ENCODE measurements at regions of chr18 and their contacts with region 1.

Region 1: DNA sequence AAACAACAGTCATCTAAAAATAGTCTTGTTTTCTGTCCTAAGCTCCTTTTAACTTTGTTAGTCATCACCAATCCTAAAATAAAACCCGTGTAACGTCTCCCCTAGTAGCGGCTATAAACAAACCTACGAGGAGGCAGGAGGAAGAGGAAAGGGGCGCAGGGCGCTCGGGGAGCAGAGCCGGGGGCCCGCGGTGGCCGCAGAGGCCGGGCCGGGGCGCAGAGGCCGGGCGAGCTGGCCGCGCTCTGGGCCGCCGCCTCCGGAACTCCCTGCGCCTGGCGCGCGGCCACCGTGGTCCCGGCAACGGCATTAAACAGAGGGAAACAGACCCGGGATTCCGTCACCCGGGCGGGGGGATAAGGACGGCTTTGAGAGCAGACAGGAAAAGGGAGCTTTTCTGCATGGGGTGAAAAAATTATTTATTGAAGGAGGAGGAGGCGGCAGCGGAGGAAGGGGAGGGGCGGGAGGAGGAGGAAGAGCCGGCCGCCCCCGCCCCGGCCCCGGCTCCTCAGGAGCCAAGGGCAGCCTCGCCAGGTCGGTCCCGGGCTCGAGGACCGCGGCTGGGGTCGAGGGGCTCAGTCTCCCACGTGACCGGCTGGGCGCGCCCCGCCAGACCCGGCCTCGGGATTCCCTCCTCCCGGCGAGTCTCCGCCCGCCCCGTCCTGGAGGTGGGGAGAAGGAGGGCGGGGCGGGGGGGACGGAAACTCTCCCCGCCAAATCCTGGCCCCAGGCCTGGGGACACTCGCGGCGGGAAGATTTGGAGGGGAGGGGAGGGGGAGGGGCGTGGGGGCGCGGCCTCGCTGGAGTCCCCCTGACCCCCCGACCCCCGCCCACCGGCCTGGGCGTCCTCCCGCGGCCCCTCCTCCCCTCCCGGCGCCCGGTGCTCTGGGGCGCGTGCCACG is 1.8 kb upstream of the NFATC1 start:
- DNase-seq: peak; percentile 67
- H3K4me3 Mint-ChIP-seq: peak overlapping the region; percentile 77
- H3K27ac Mint-ChIP-seq: peak overlapping the region; percentile 74
- H3K4me1 Mint-ChIP-seq: peaks cover 25% of the 10 kb centered on the region
- H3K27me3 Mint-ChIP-seq: peaks cover 4% of the 10 kb centered on the region

Region 2: GRCh38 chr18:79378542-79379250 is 15.2 kb before region 1 on chr18:
- CTCF ChIA-PET with region 1: interaction called, 35 read pairs
- POLR2A ChIA-PET with region 1: no interaction called
- intact Hi-C with region 1: loop called (anchors 2 kb)
- DNase-seq: peak; percentile 90
- H3K4me3 Mint-ChIP-seq: no peak overlapping the region
- H3K27ac Mint-ChIP-seq: no peak overlapping the region
- H3K4me1 Mint-ChIP-seq: peaks cover 15% of the 10 kb centered on the region
- H3K27me3 Mint-ChIP-seq: no peaks in the 10 kb centered on the region

Region 3: GRCh38 chr18:79405781-79406575 is 12.1 kb after region 1 on chr18:
- CTCF ChIA-PET with region 1: interaction called, 6 read pairs
- POLR2A ChIA-PET with region 1: interaction called, 15 read pairs
- intact Hi-C with region 1: loop called (anchors 1 kb)
- DNase-seq: peak; percentile 94
- H3K4me3 Mint-ChIP-seq: peak overlapping the region; percentile 69
- H3K27ac Mint-ChIP-seq: peak overlapping the region; percentile 94
- H3K4me1 Mint-ChIP-seq: peaks cover 55% of the 10 kb centered on the region
- H3K27me3 Mint-ChIP-seq: no peaks in the 10 kb centered on the region

Region 4: GRCh38 chr18:79422022-79422782 is 28.3 kb after region 1 on chr18:
- CTCF ChIA-PET with region 1: no interaction called
- POLR2A ChIA-PET with region 1: no interaction called
- intact Hi-C with region 1: no loop called
- DNase-seq: no peak
- H3K4me3 Mint-ChIP-seq: no peak overlapping the region
- H3K27ac Mint-ChIP-seq: no peak overlapping the region
- H3K4me1 Mint-ChIP-seq: peaks cover 34% of the 10 kb centered on the region
- H3K27me3 Mint-ChIP-seq: no peaks in the 10 kb centered on the region

Region 5: GRCh38 chr18:79434607-79435401 is 40.9 kb after region 1 on chr18:
- CTCF ChIA-PET with region 1: interaction called, 11 read pairs
- POLR2A ChIA-PET with region 1: interaction called, 7 read pairs
- intact Hi-C with region 1: loop called (anchors 1 kb)
- DNase-seq: no peak
- H3K4me3 Mint-ChIP-seq: no peak overlapping the region
- H3K27ac Mint-ChIP-seq: no peak overlapping the region
- H3K4me1 Mint-ChIP-seq: peaks cover 60% of the 10 kb centered on the region
- H3K27me3 Mint-ChIP-seq: no peaks in the 10 kb centered on the region

Region 6: GRCh38 chr18:79523736-79524180 is 129.9 kb after region 1 on chr18:
- CTCF ChIA-PET with region 1: interaction called, 22 read pairs
- POLR2A ChIA-PET with region 1: interaction called, 63 read pairs
- intact Hi-C with region 1: loop called (anchors 1 kb)
- DNase-seq: peak; percentile 88
- H3K4me3 Mint-ChIP-seq: peak overlapping the region; percentile 75
- H3K27ac Mint-ChIP-seq: peak overlapping the region; percentile 99
- H3K4me1 Mint-ChIP-seq: peaks cover 63% of the 10 kb centered on the region
- H3K27me3 Mint-ChIP-seq: no peaks in the 10 kb centered on the region

Region 7: DNA sequence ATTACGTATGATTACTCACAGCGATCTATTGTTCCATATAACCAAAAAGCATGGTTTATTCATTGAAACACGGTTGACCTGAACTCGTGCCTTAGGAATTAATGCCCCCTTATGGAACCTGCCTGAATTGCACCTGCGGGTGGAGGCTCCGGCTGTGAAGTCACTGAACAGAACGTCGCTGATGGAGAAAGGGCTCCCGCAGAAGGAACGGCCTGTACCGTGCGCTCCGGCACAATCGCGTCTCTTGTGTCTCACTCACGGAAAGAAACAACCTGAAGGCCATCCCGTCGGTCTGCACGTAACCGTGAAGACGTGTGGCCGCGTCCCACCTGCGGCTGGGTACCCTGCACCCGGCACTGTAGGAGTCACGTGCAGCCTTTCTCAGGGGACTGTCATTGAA is 135.0 kb after region 1 on chr18:
- CTCF ChIA-PET with region 1: interaction called, 22 read pairs
- POLR2A ChIA-PET with region 1: interaction called, 63 read pairs
- intact Hi-C with region 1: loop called (anchors 1 kb)
- DNase-seq: peak; percentile 81
- H3K4me3 Mint-ChIP-seq: no peak overlapping the region
- H3K27ac Mint-ChIP-seq: no peak overlapping the region
- H3K4me1 Mint-ChIP-seq: peaks cover 15% of the 10 kb centered on the region
- H3K27me3 Mint-ChIP-seq: no peaks in the 10 kb centered on the region

Measured in activated CD4-positive, alpha-beta memory T cell treated with anti-CD3 and anti-CD28 coated beads for 36 hours (primary cell).